Left ventricle myocardium inferior (tissue), 1 donor: ENCODE measurements at regions of chr3 and their contacts with region 1.

Region 1: DNA sequence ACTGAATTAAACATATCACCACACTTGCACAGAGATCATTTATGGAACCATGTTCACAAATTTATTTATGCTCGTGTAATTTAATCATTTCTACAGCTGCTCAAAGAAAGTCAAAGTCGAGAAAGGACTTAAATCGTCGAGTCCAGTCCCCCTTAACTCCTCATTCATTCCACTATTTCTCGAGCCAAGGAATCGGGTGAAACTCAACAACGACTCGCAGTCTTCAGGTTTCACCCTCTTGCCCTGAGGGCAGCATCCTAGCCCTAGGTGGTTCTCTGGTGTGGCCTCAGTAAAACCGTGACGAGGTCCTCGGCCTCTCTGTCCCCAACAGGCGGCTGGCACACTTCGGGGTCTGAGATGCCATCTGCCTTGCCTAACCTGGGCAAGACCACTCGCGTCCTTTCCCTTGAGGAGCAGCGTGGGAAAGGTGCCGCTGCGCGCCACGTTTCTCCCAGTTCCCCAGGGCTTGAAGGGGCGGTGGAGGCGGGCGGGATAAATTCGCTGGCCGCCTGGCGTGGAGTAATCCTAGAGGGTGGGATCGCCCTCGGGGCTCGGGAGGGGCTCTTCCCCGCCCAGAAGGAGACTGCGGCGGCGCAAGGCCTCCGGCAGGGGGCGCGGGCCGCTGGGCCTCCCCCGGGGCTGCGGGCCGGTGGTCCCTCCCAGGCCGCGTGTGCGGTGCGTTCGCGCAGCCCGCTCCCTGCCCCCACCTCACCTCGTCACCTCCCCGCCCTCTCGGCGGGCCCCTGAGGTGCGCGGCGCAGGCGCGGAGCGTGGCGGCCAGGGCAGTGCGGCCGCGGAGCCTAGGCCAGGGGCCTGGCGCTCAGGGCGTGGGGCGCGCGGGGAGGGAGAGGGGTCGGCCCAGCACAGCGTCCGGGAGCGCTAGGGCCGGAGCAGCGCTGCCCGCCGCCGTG is at the start of gene ZNF639:
- DNase-seq: peak; percentile 83
- H3K4me3 ChIP-seq: peak within 1 kb of the TSS; percentile 85
- H3K27ac ChIP-seq: peak within 1 kb of the TSS; percentile 95
- H3K4me1 ChIP-seq: peaks cover 53% of the 10 kb centered on the region
- H3K27me3 ChIP-seq: no peaks in the 10 kb centered on the region
- CTCF ChIP-seq: peak; percentile 89
- total RNA-seq, gene ZNF639: 28.8 TPM

Region 2: DNA sequence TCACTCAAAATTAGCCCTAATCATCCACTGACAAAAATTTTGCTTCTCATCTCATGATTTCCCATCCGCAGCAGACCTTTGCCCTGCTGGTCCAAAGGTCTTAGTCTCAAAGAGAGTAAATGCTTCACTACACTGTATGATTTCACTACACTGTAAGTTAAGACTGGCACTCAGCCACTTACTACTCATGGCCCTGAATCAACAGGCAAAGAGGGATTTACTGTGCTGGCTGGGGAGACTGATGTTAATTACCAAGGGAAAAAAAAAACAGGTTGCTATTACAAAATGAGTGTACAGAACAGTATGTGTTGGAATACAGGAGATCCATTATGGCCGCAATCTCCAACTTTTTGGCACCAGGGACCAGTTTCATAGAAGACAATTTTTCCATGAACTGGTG is 465.7 kb before region 1 on chr3:
- intact Hi-C with region 1: no loop called
- DNase-seq: no peak
- H3K4me3 ChIP-seq: no peak overlapping the region
- H3K27ac ChIP-seq: no peak overlapping the region
- H3K4me1 ChIP-seq: no peaks in the 10 kb centered on the region
- H3K27me3 ChIP-seq: no peaks in the 10 kb centered on the region
- CTCF ChIP-seq: no peak

Region 3: GRCh38 chr3:179015551-179016020 is 307.0 kb before region 1 on chr3:
- intact Hi-C with region 1: loop called (anchors 5 kb)
- DNase-seq: no peak
- H3K4me3 ChIP-seq: no peak overlapping the region
- H3K27ac ChIP-seq: no peak overlapping the region
- H3K4me1 ChIP-seq: peaks cover 10% of the 10 kb centered on the region
- H3K27me3 ChIP-seq: no peaks in the 10 kb centered on the region
- CTCF ChIP-seq: peak; percentile 91

Region 4: GRCh38 chr3:179100652-179101051 is 221.9 kb before region 1 on chr3:
- intact Hi-C with region 1: loop called (anchors 5 kb)
- DNase-seq: no peak
- H3K4me3 ChIP-seq: no peak overlapping the region
- H3K27ac ChIP-seq: no peak overlapping the region
- H3K4me1 ChIP-seq: no peaks in the 10 kb centered on the region
- H3K27me3 ChIP-seq: peaks cover 7% of the 10 kb centered on the region
- CTCF ChIP-seq: no peak

Region 5: DNA sequence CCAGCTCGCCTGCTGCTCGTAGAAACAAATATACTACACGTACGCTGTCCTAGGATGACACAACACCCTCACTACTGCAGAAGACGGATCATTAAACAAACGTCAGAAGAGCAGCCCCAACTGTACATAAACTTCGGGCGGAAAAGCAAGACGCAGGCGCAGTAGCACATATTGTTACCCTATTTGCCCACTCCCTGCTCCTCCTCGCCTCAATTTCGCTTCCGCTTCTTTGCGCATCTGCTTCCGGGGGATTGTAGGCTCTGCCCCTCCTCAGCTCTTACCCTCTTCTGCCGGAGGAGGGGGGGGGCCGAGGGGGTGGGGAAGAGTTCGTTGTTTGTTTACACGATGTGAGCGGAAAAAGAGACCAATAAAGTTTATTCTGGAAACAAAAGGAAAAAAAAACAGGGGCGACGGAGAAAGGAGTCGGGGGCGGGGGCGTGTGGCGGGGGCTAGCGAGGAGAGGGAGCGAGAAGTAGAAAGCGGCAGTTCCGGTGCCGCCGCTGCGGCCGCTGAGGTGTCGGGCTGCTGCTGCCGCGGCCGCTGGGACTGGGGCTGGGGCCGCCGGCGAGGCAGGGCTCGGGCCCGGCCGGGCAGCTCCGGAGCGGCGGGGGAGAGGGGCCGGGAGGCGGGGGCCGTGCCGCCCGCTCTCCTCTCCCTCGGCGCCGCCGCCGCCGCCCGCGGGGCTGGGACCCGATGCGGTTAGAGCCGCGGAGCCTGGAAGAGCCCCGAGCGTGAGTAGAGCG is 174.5 kb before region 1 on chr3 and contains the start of gene PIK3CA:
- intact Hi-C with region 1: loop called (anchors 2 kb)
- DNase-seq: peak; percentile 93
- H3K4me3 ChIP-seq: peak within 1 kb of the TSS; percentile 96
- H3K27ac ChIP-seq: peak within 1 kb of the TSS; percentile 98
- H3K4me1 ChIP-seq: peaks cover 58% of the 10 kb centered on the region
- H3K27me3 ChIP-seq: no peaks in the 10 kb centered on the region
- CTCF ChIP-seq: no peak
- total RNA-seq, gene PIK3CA: 19.6 TPM

Region 6: DNA sequence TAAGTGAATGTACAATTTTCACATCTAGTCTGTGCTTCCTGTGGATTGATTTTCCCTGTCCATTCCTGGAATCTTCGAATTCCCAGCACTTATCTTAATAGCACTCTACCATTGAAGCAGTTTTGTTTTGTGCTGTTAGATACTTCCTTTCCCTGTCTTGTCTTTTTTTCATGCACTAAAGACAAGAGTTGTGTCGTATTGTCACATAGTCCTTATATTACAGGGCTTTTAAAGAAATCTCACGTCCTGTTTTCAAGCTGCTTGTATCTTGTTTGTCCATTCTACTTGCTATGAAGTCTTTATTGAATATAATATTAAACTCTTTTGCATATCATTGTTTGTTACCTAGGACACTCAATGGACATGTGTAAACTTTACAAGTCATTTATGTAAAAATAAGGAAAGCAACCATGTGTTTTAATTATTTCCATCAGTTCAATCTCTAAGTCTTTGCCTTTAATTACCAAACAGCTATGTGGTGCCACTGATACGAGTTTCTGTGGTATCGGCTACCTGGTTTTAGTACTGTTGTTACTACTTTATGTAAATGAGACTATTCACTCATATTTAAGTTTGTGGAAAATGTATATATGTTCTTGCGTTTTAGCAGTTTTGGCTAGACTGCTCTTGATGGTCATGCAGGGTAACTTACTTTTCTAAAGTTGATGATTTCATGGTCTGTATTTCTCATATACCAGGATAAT is 164.1 kb before region 1 on chr3:
- intact Hi-C with region 1: no loop called
- DNase-seq: no peak
- H3K4me3 ChIP-seq: no peak overlapping the region
- H3K27ac ChIP-seq: no peak overlapping the region
- H3K4me1 ChIP-seq: peaks cover 77% of the 10 kb centered on the region
- H3K27me3 ChIP-seq: no peaks in the 10 kb centered on the region
- CTCF ChIP-seq: no peak